ENCODE measurements at regions of chr3 and their contacts with region 1.

Region 1: DNA sequence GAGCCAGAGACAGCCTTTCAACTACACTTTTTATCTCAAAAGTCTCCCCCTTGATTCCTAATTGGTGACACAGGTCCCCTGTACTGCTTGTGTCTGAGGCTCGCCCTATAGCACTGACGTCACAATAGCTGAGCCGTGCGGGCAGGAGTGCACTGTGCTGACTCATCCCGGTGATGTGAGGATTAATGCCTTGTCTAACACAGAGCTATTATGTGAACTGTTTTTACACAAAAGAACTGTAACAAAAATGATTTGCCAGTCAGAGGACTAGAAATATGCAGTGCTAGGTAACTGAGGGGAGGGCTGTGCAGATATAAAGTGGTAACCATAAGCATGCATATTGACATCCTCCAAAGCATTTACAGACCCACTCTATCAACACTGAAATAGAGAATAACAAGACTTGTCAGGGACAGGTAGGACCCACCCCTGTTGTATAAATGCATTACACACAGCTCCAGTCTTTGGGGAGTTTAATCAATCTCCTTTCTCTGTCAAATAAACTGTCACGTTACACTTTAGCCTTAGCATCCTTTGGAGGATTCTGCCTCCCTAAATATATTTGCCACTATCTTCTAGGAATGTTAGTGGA is 205.0 kb downstream of the TIGIT start:
- DNase-seq: no peak
- ATAC-seq: peak; percentile 64 to 80 (median 70)
- H3K4me3 ChIP-seq: no peak overlapping the region
- H3K27ac ChIP-seq: peak overlapping the region; percentile 43
- H3K4me1 ChIP-seq: peaks cover 67% of the 10 kb centered on the region
- H3K27me3 ChIP-seq: no peaks in the 10 kb centered on the region
- CTCF ChIP-seq: no peak

Region 2: GRCh38 chr3:114454551-114455251 is 44.2 kb before region 1 on chr3:
- intact Hi-C with region 1: loop called in 1 of 2 experiments (anchors 5 kb)
- DNase-seq: no peak
- ATAC-seq: peak; percentile 36 to 72 (median 62)
- H3K4me3 ChIP-seq: peak overlapping the region; percentile 56
- H3K27ac ChIP-seq: peak overlapping the region; percentile 68
- H3K4me1 ChIP-seq: peaks cover 85% of the 10 kb centered on the region
- H3K27me3 ChIP-seq: no peaks in the 10 kb centered on the region
- CTCF ChIP-seq: no peak

Region 3: DNA sequence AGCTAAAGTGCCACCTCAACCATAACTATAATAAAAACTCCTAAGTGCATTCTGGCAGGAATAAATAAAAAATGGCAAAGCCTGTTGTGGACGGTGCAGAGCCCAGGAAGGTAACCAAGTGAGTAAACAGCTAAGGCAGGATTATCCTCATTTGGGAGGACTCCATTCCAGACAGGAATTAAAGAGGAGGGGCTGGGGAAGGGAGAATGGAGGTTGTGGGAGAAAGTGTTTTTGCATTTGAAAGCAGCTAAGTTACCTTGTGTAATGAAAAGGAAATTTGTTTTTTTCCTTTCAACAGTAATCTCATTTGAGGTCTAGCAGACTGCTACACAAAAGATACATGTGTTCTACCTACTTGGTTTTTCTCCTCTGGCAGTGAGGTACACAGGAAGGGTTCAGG is 43.5 kb after region 1 on chr3:
- intact Hi-C with region 1: no loop called
- DNase-seq: no peak
- ATAC-seq: no peak
- H3K4me3 ChIP-seq: no peak overlapping the region
- H3K27ac ChIP-seq: no peak overlapping the region
- H3K4me1 ChIP-seq: peaks cover 15% of the 10 kb centered on the region
- H3K27me3 ChIP-seq: no peaks in the 10 kb centered on the region
- CTCF ChIP-seq: no peak

Measured in psoas muscle (tissue), 8 donors.